Right ventricle myocardium inferior (tissue), 1 donor: ENCODE measurements at regions of chr1 and their contacts with region 1.

Region 1: DNA sequence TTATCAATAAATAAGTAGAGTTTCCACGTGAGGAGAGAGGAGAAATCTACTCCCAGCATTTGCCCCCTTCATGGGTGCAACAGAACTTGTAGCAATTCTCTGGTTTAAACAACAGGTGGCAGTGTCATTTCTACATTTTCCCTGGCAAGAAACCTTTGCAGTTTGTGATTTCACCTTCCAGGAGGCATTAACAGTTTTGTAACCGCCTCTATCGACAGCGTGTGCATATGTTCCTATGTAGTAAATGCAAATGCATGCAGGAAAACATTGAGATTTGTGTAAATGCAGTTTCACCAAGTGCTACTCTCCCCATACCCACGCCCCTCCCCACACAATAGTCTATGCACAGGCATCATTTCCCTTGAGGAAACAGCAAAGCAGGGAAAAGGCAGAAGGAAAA is 494.7 kb downstream of the SMYD3 start:
- DNase-seq: no peak
- ATAC-seq: no peak

Region 2: DNA sequence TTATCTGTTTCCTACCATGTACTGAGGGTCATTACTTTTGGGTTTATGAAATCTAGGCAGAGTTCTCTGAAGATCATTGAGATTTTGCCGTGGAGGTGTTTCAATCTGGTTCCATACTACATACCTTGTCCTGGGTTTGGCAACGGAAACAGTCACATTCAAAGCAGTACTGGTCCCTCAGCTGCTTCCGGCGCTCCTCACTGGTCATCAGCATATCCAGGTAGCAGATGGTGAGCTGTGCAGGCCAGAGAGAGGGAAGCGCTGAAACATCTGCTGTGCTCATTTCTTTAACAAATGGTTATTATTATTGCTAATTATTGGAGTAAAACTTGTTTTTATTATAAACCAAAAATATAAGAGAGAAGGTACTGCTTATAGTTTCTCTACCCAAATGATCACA is 96.9 kb before region 1 on chr1:
- intact Hi-C with region 1: no loop called
- DNase-seq: no peak
- ATAC-seq: no peak

Region 3: GRCh38 chr1:246270236-246270635 is 257.9 kb after region 1 on chr1:
- intact Hi-C with region 1: loop called (anchors 10 kb)
- DNase-seq: no peak
- ATAC-seq: no peak

Region 4: GRCh38 chr1:246450611-246451251 is 438.4 kb after region 1 on chr1:
- intact Hi-C with region 1: loop called (anchors 2 kb)
- DNase-seq: no peak
- ATAC-seq: peak; percentile 56